ENCODE measurements at regions of chr10 and their contacts with region 1.

Region 1: GRCh38 chr10:13586676-13587355 is at the start of gene PRPF18:
- DNase-seq: peak; percentile 60 to 96
- H3K4me3 ChIP-seq: peak within 1 kb of the TSS; percentile 81 to 86
- H3K27ac ChIP-seq: peak within 1 kb of the TSS; percentile 50 to 53
- H3K4me1 ChIP-seq: peaks cover 5 to 10% of the 10 kb centered on the region in 2 donors
- H3K27me3 ChIP-seq: no peaks in the 10 kb centered on the region
- CTCF ChIP-seq: peak; percentile 88 to 99 (median 98)
- total RNA-seq, gene PRPF18: 3.4 TPM

Region 2: DNA sequence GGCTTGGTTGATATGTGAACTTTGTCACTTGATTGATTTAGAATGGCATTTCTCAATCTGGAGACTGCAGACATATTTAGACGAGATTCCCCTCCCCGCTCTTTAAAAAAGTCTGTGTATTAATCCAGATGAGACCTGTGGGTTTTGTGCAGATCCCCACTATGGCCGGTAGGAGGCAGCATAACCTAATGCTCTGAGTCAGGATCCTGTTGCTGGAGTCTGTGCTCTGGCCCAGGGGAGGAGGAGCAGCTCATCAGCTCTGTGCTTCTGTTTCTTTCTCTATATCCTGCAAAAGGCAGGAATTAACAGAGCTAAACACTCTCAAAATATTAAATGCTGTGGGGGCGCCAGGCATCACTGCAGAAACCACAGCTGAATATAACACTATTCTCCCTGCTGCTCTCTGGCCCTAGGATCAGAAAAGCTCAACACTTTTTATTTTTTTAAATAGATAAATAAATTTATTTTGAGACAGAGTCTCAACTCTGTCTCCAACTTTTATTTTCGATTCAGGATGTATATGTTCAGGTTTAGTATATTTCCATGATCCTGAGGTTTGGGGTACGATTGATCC is 214.8 kb before region 1 on chr10:
- intact Hi-C with region 1: loop called (anchors 1 kb)
- DNase-seq: peak in 1 of 2 donors; percentile 76
- H3K4me3 ChIP-seq: no peak overlapping the region
- H3K27ac ChIP-seq: no peak overlapping the region
- H3K4me1 ChIP-seq: no peaks in the 10 kb centered on the region
- H3K27me3 ChIP-seq: no peaks in the 10 kb centered on the region
- CTCF ChIP-seq: peak; percentile 48 to 83 (median 72)

Region 3: DNA sequence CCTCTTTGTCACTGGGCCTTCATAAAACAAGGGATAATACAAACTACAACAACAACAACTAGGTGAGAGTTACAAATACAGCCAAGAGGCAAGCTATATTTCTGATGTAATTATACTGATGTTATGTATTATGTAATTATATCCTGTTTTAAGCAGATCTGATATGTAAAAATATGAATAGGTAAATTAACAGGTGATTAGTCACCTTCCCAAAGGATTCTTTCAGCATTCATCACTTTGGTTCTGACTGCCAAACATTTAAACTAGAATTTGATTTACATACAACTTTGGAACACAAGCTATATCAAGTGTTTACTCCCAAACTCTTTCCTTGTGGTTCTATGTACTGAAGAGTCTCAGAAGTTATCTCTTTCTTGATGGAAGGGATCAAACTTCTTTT is 111.7 kb before region 1 on chr10:
- intact Hi-C with region 1: no loop called
- DNase-seq: no peak
- H3K4me3 ChIP-seq: no peak overlapping the region
- H3K27ac ChIP-seq: no peak overlapping the region
- H3K4me1 ChIP-seq: no peaks in the 10 kb centered on the region
- H3K27me3 ChIP-seq: no peaks in the 10 kb centered on the region
- CTCF ChIP-seq: no peak

Region 4: GRCh38 chr10:13528875-13529713 is 57.7 kb before region 1 on chr10 and contains the start of gene BEND7:
- intact Hi-C with region 1: loop called (anchors 2 kb)
- DNase-seq: no peak
- H3K4me3 ChIP-seq: peak within 1 kb of the TSS; percentile 66 to 80
- H3K27ac ChIP-seq: peak within 1 kb of the TSS; percentile 65 to 82
- H3K4me1 ChIP-seq: peaks cover 0 to 5% of the 10 kb centered on the region in 2 donors
- H3K27me3 ChIP-seq: no peaks in the 10 kb centered on the region
- CTCF ChIP-seq: no peak
- total RNA-seq, gene BEND7: 6.9 TPM

Measured in ascending aorta (tissue), 2 donors.